ENCODE measurements at regions of chr4 and their contacts with region 1.

Region 1: GRCh38 chr4:63396269-63396668 is 1013.0 kb downstream of the TECRL start:
- DNase-seq: no peak
- H3K4me3 ChIP-seq: no peak overlapping the region
- H3K27ac ChIP-seq: no peak overlapping the region
- H3K4me1 ChIP-seq: no peaks in the 10 kb centered on the region
- H3K27me3 ChIP-seq: no peaks in the 10 kb centered on the region
- CTCF ChIP-seq: no peak

Region 2: GRCh38 chr4:64200001-64200555 is 803.8 kb after region 1 on chr4:
- CTCF ChIA-PET with region 1: no interaction called
- POLR2A ChIA-PET with region 1: interaction called, 13 read pairs
- intact Hi-C with region 1: no loop called
- DNase-seq: no peak
- H3K4me3 ChIP-seq: no peak overlapping the region
- H3K27ac ChIP-seq: no peak overlapping the region
- H3K4me1 ChIP-seq: no peaks in the 10 kb centered on the region
- H3K27me3 ChIP-seq: no peaks in the 10 kb centered on the region
- CTCF ChIP-seq: no peak